ENCODE measurements at regions of chr14 and their contacts with region 1.

Region 1: GRCh38 chr14:105351920-105352851 is 37.6 kb downstream of the PACS2 start:
- DNase-seq: peak; percentile 80 to 93 (median 87)
- ATAC-seq: peak; percentile 99
- H3K4me3 ChIP-seq: no peak overlapping the region
- H3K4me3 Mint-ChIP-seq: no peak overlapping the region
- H3K27ac ChIP-seq: no peak overlapping the region
- H3K27ac Mint-ChIP-seq: no peak overlapping the region
- H3K4me1 ChIP-seq: peaks cover 4% of the 10 kb centered on the region
- H3K4me1 Mint-ChIP-seq: peaks cover 3% of the 10 kb centered on the region
- H3K27me3 ChIP-seq: no peaks in the 10 kb centered on the region
- H3K27me3 Mint-ChIP-seq: no peaks in the 10 kb centered on the region
- CTCF ChIP-seq: peak; percentile 76

Region 2: DNA sequence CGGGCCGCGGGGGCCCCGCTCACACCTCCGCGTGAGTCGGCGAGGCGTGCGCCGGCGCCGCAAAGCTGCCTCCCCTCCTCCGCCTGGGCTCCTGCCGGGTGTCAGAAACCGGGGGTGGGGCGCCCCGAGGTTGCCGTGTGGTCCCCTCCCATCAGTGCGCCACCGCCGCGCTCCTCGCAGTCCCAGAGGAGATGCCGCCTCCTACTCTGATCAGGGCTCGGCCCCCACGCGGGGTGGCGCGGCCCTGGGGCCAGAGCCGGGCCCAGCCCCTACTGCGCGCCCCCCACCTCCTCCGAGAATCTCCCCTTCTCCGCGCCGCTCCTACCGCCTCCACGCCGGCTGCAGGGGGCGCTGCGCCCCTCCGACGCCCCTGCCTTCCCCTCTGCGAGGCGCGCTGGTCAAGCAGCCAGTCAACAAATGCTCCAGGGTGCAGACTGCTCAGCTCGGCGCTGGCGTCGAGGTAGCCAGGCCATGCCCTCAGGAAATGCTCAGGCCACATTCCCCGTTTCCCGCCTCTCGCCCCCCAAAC is 183.1 kb before region 1 on chr14:
- CTCF ChIA-PET with region 1: interaction called, 4 read pairs
- POLR2A ChIA-PET with region 1: no interaction called
- intact Hi-C with region 1: loop called in 1 of 2 experiments (anchors 1 kb)
- DNase-seq: peak in 5 of 9 experiments; percentile 28 to 63 (median 34)
- ATAC-seq: peak; percentile 47
- H3K4me3 ChIP-seq: peak overlapping the region in 1 of 2 experiments; percentile 27
- H3K4me3 Mint-ChIP-seq: peak overlapping the region; percentile 77
- H3K27ac ChIP-seq: no peak overlapping the region
- H3K27ac Mint-ChIP-seq: no peak overlapping the region
- H3K4me1 ChIP-seq: peaks cover 23% of the 10 kb centered on the region
- H3K4me1 Mint-ChIP-seq: peaks cover 8% of the 10 kb centered on the region
- H3K27me3 ChIP-seq: peaks cover 14 to 20% of the 10 kb centered on the region in 2 experiments
- H3K27me3 Mint-ChIP-seq: peaks cover 18% of the 10 kb centered on the region
- CTCF ChIP-seq: peak; percentile 53

Region 3: DNA sequence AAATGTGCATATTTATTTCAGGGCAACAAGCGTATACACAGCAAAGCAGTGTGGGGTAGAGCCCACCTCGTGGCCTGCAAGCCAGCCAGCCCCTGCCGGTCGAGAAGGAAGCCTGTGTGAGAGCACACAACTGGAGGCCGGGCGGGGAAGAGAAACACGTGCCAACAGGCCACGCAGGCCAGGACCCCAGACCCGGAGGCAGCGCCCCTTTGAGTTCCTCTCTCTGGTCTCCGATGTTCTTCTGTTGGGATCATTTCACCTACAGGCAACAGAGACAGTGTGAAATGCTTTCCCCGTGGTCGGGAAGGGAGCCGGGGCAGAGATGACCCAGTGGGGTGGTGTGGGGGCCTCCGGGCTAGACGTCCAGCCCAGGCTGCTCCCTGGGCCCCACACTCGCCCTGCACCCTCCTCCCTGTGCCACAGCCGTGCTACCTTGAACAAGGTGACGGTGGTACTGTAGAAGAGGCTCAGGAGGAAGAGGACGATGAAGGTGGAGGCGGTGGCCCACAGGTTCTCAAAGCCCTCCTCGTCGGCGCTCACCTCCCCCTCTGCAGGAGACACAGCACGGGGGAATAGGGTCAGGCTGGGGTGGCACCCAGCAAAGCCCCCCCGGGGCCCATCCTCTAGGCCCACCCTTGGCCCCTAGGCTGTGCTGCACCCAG is 499.7 kb after region 1 on chr14:
- CTCF ChIA-PET with region 1: no interaction called
- POLR2A ChIA-PET with region 1: no interaction called
- intact Hi-C with region 1: no loop called
- DNase-seq: peak in 2 of 9 experiments; percentile 6 to 38
- ATAC-seq: no peak
- H3K4me3 ChIP-seq: no peak overlapping the region
- H3K4me3 Mint-ChIP-seq: no peak overlapping the region
- H3K27ac ChIP-seq: no peak overlapping the region
- H3K27ac Mint-ChIP-seq: no peak overlapping the region
- H3K4me1 ChIP-seq: peaks cover 12% of the 10 kb centered on the region
- H3K4me1 Mint-ChIP-seq: peaks cover 16% of the 10 kb centered on the region
- H3K27me3 ChIP-seq: no peaks in the 10 kb centered on the region
- H3K27me3 Mint-ChIP-seq: peaks cover 3% of the 10 kb centered on the region
- CTCF ChIP-seq: no peak

Measured in CD8-positive, alpha-beta T cell (primary cell).